PC-3 (cell line): ENCODE measurements at regions of chr4 and their contacts with region 1.

Region 1: DNA sequence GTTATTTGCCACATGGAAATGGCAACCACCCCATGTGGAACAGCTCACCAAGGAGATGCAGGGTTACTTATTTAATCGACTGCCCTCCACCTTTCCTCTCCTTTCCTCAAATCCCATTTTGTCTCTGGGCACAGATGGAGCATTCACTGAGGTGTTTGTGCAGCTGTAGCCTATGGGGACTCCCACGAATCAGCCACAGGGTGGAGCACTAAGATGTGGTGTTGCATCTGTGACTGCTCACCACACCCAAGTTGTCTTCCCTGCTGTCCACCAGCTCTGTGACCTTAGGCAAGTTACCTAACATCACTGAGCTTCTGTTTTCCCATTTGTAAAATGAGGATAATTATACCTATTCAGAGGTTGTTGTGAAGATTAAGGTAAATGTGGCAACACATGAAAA is 252.4 kb upstream of the CPEB2 start:
- DNase-seq: peak; percentile 60
- ATAC-seq: peak; percentile 73
- H3K4me3 ChIP-seq: no peak overlapping the region
- H3K27ac ChIP-seq: no peak overlapping the region
- H3K4me1 ChIP-seq: no peaks in the 10 kb centered on the region
- H3K27me3 ChIP-seq: no peaks in the 10 kb centered on the region
- CTCF ChIP-seq: peak; percentile 69

Region 2: DNA sequence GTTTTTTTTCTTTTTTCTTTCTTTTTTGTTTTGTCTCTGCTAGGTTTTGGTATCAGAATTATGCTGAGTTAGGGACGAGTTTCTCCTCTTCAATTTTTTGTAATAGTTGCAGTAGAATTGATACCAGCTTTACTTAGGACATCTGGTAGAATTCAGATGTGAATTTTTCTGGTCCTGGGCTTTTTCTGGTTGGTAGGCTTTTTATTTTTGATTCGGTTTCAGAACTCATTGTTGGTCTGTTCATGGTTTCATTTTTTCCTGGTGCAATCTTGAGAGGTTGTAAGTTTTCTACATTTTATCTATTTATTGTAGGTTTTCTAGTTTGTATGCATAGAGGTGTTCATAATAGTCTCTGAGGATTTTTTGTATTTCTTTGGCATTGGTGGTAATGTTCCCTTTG is 245.7 kb before region 1 on chr4:
- CTCF ChIA-PET with region 1: no interaction called
- POLR2A ChIA-PET with region 1: no interaction called
- intact Hi-C with region 1: no loop called
- DNase-seq: no peak
- ATAC-seq: no peak
- H3K4me3 ChIP-seq: no peak overlapping the region
- H3K27ac ChIP-seq: no peak overlapping the region
- H3K4me1 ChIP-seq: no peaks in the 10 kb centered on the region
- H3K27me3 ChIP-seq: no peaks in the 10 kb centered on the region
- CTCF ChIP-seq: no peak

Region 3: GRCh38 chr4:15162465-15163283 is 412.8 kb after region 1 on chr4:
- CTCF ChIA-PET with region 1: no interaction called
- POLR2A ChIA-PET with region 1: no interaction called
- intact Hi-C with region 1: loop called (anchors 5 kb)
- DNase-seq: peak; percentile 36
- ATAC-seq: peak; percentile 58
- H3K4me3 ChIP-seq: no peak overlapping the region
- H3K27ac ChIP-seq: no peak overlapping the region
- H3K4me1 ChIP-seq: peaks cover 17% of the 10 kb centered on the region
- H3K27me3 ChIP-seq: no peaks in the 10 kb centered on the region
- CTCF ChIP-seq: peak; percentile 60